ENCODE measurements at regions of chr2 and their contacts with region 1.

Region 1: GRCh38 chr2:219057709-219058540 is 2.8 kb downstream of the IHH start:
- DNase-seq: peak; percentile 72
- ATAC-seq: peak; percentile 67
- H3K4me3 ChIP-seq: no peak overlapping the region
- H3K27ac ChIP-seq: no peak overlapping the region
- H3K4me1 ChIP-seq: peaks cover 22% of the 10 kb centered on the region
- H3K27me3 ChIP-seq: peaks cover 46% of the 10 kb centered on the region
- CTCF ChIP-seq: peak; percentile 87

Region 2: GRCh38 chr2:219119422-219120043 is 61.6 kb after region 1 on chr2:
- CTCF ChIA-PET with region 1: interaction called, 4 read pairs
- POLR2A ChIA-PET with region 1: no interaction called
- intact Hi-C with region 1: loop called (anchors 1 kb)
- DNase-seq: peak; percentile 72
- ATAC-seq: peak; percentile 78
- H3K4me3 ChIP-seq: no peak overlapping the region
- H3K27ac ChIP-seq: no peak overlapping the region
- H3K4me1 ChIP-seq: peaks cover 25% of the 10 kb centered on the region
- H3K27me3 ChIP-seq: no peaks in the 10 kb centered on the region
- CTCF ChIP-seq: peak; percentile 93

Region 3: GRCh38 chr2:219155054-219155644 is 97.2 kb after region 1 on chr2:
- CTCF ChIA-PET with region 1: interaction called, 12 read pairs
- POLR2A ChIA-PET with region 1: no interaction called
- intact Hi-C with region 1: loop called (anchors 1 kb)
- DNase-seq: peak; percentile 89
- ATAC-seq: peak; percentile 44
- H3K4me3 ChIP-seq: no peak overlapping the region
- H3K27ac ChIP-seq: no peak overlapping the region
- H3K4me1 ChIP-seq: peaks cover 19% of the 10 kb centered on the region
- H3K27me3 ChIP-seq: no peaks in the 10 kb centered on the region
- CTCF ChIP-seq: peak; percentile 65

Region 4: DNA sequence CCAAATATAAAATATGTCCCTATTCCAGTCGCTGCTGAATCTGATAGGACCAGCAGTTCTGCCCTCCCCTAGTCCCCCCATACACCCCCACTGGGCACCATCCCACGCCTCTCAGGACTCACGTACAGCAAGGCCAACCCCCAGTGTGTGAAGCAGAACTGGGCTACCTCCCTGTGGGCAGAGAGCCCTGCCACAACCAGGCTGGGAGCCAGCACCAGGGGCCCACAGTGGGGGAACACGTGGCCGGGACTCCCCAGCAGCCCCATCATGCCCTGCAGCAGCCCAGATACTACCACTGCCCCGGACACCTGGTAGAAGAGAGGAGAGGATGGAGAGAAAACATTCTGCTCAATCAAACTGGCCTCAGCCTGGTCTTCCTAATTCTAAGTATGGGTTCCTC is 110.6 kb after region 1 on chr2:
- CTCF ChIA-PET with region 1: no interaction called
- POLR2A ChIA-PET with region 1: no interaction called
- intact Hi-C with region 1: no loop called
- DNase-seq: peak; percentile 0
- ATAC-seq: no peak
- H3K4me3 ChIP-seq: no peak overlapping the region
- H3K27ac ChIP-seq: no peak overlapping the region
- H3K4me1 ChIP-seq: no peaks in the 10 kb centered on the region
- H3K27me3 ChIP-seq: no peaks in the 10 kb centered on the region
- CTCF ChIP-seq: no peak